ENCODE measurements at regions of chr4 and their contacts with region 1.

Region 1: DNA sequence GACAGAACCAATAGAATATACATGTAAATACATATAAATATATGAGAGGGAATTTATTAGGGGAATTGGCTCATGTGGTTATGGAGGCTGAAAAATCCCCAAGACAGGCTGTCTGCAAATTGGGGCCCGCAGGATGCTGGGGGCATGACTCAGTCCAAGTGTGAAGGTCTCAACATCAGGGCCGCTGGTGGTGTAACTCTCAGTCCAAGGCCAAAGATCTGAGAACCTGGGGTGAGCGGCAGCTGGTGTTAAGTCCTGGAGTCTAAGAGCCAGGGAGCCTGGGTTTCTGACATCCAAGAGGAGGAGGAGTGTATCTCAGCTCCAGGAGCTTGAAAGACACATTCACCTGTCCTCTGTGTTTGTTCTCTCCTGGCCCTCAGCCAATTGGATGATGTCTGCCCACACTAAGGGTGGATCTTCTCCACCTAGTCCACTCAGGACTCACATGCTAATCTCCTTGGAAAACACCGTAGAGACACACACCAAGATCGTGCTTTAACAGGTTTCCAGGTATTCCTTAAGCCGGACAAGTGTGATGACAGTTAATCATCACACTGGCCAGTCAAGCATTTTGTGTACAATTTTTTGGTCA is 28.9 kb downstream of the TIGD2 start:
- DNase-seq: no peak
- H3K4me3 Mint-ChIP-seq: no peak overlapping the region
- H3K27ac Mint-ChIP-seq: no peak overlapping the region
- H3K4me1 Mint-ChIP-seq: no peaks in the 10 kb centered on the region
- H3K27me3 Mint-ChIP-seq: no peaks in the 10 kb centered on the region

Region 2: GRCh38 chr4:88880501-88881226 is 259.6 kb before region 1 on chr4:
- CTCF ChIA-PET with region 1: no interaction called
- POLR2A ChIA-PET with region 1: no interaction called
- DNase-seq: no peak
- H3K4me3 Mint-ChIP-seq: no peak overlapping the region
- H3K27ac Mint-ChIP-seq: no peak overlapping the region
- H3K4me1 Mint-ChIP-seq: no peaks in the 10 kb centered on the region
- H3K27me3 Mint-ChIP-seq: peaks cover 12% of the 10 kb centered on the region

Region 3: GRCh38 chr4:89054627-89055026 is 85.6 kb before region 1 on chr4:
- CTCF ChIA-PET with region 1: no interaction called
- POLR2A ChIA-PET with region 1: interaction called, 11 read pairs
- DNase-seq: no peak
- H3K4me3 Mint-ChIP-seq: no peak overlapping the region
- H3K27ac Mint-ChIP-seq: no peak overlapping the region
- H3K4me1 Mint-ChIP-seq: peaks cover 15% of the 10 kb centered on the region
- H3K27me3 Mint-ChIP-seq: no peaks in the 10 kb centered on the region

Measured in activated CD4-positive, alpha-beta T cell treated with anti-CD3 and anti-CD28 coated beads, Interleukin-2, amount 10 ng/mL, durations not matched to agents 7 days and 5 days (primary cell).